Naive thymus-derived CD4-positive, alpha-beta T cell (primary cell): ENCODE measurements at regions of chr9 and their contacts with region 1.

Region 1: GRCh38 chr9:99221621-99222415 is at the starts of genes ALG2 and SEC61B:
- DNase-seq: peak; percentile 86 to 94 (median 91)
- ATAC-seq: peak; percentile 93
- H3K4me3 ChIP-seq: peak within 1 kb of the TSS; percentile 90
- H3K4me3 Mint-ChIP-seq: peak within 1 kb of the TSS; percentile 92 to 100 (median 99)
- H3K27ac ChIP-seq: peak within 1 kb of the TSS; percentile 86
- H3K27ac Mint-ChIP-seq: peak within 1 kb of the TSS; percentile 99 to 100 (median 100)
- H3K4me1 ChIP-seq: peaks cover 21 to 29% of the 10 kb centered on the region in 2 donors
- H3K4me1 Mint-ChIP-seq: peaks cover 48 to 91% (median 81%) of the 10 kb centered on the region in 7 donors
- H3K27me3 ChIP-seq: no peaks in the 10 kb centered on the region
- H3K27me3 Mint-ChIP-seq: no peaks in the 10 kb centered on the region
- total RNA-seq, gene ALG2: 13.9 to 33.7 (median 25.2) TPM
- total RNA-seq, gene SEC61B: 50.4 to 165 (median 54.6) TPM

Region 2: GRCh38 chr9:99057665-99058625 is 163.9 kb before region 1 on chr9:
- CTCF ChIA-PET with region 1: no interaction called
- POLR2A ChIA-PET with region 1: interaction called, 3 read pairs
- intact Hi-C with region 1: loop called in 1 of 2 experiments (anchors 2 kb)
- DNase-seq: peak; percentile 16 to 86 (median 82)
- ATAC-seq: peak; percentile 74
- H3K4me3 ChIP-seq: peak overlapping the region; percentile 56
- H3K4me3 Mint-ChIP-seq: peak overlapping the region; percentile 79 to 92 (median 89)
- H3K27ac ChIP-seq: peak overlapping the region; percentile 25
- H3K27ac Mint-ChIP-seq: peak overlapping the region; percentile 21 to 95 (median 75)
- H3K4me1 ChIP-seq: peaks cover 62 to 76% of the 10 kb centered on the region in 2 donors
- H3K4me1 Mint-ChIP-seq: peaks cover 62 to 90% (median 78%) of the 10 kb centered on the region in 7 donors
- H3K27me3 ChIP-seq: no peaks in the 10 kb centered on the region
- H3K27me3 Mint-ChIP-seq: peaks cover 0 to 8% (median 0%) of the 10 kb centered on the region in 5 donors

Region 3: GRCh38 chr9:99118782-99119466 is 102.9 kb before region 1 on chr9:
- CTCF ChIA-PET with region 1: no interaction called
- POLR2A ChIA-PET with region 1: no interaction called
- intact Hi-C with region 1: loop called in 1 of 2 experiments (anchors 5 kb)
- DNase-seq: peak in 8 of 9 donors; percentile 40 to 79 (median 70)
- ATAC-seq: peak; percentile 99
- H3K4me3 ChIP-seq: peak overlapping the region; percentile 39
- H3K4me3 Mint-ChIP-seq: peak overlapping the region; percentile 69 to 92 (median 82)
- H3K27ac ChIP-seq: peak overlapping the region; percentile 62
- H3K27ac Mint-ChIP-seq: peak overlapping the region; percentile 39 to 96 (median 86)
- H3K4me1 ChIP-seq: peaks cover 59 to 76% of the 10 kb centered on the region in 2 donors
- H3K4me1 Mint-ChIP-seq: peaks cover 57 to 97% (median 89%) of the 10 kb centered on the region in 7 donors
- H3K27me3 ChIP-seq: no peaks in the 10 kb centered on the region
- H3K27me3 Mint-ChIP-seq: no peaks in the 10 kb centered on the region

Region 4: GRCh38 chr9:99253772-99254431 is 32.1 kb after region 1 on chr9:
- CTCF ChIA-PET with region 1: no interaction called
- POLR2A ChIA-PET with region 1: interaction called, 8 read pairs
- intact Hi-C with region 1: loop called (anchors 1 kb)
- DNase-seq: peak in 2 of 9 donors; percentile 8 to 89
- ATAC-seq: peak; percentile 73
- H3K4me3 ChIP-seq: no peak overlapping the region
- H3K4me3 Mint-ChIP-seq: peak overlapping the region in 6 of 10 donors; percentile 38 to 81 (median 50)
- H3K27ac ChIP-seq: no peak overlapping the region
- H3K27ac Mint-ChIP-seq: peak overlapping the region in 2 of 9 donors; percentile 56 to 92
- H3K4me1 ChIP-seq: no peaks in the 10 kb centered on the region
- H3K4me1 Mint-ChIP-seq: peaks cover 0 to 38% (median 7%) of the 10 kb centered on the region in 7 donors
- H3K27me3 ChIP-seq: no peaks in the 10 kb centered on the region
- H3K27me3 Mint-ChIP-seq: peaks cover 0 to 8% (median 0%) of the 10 kb centered on the region in 5 donors

Region 5: DNA sequence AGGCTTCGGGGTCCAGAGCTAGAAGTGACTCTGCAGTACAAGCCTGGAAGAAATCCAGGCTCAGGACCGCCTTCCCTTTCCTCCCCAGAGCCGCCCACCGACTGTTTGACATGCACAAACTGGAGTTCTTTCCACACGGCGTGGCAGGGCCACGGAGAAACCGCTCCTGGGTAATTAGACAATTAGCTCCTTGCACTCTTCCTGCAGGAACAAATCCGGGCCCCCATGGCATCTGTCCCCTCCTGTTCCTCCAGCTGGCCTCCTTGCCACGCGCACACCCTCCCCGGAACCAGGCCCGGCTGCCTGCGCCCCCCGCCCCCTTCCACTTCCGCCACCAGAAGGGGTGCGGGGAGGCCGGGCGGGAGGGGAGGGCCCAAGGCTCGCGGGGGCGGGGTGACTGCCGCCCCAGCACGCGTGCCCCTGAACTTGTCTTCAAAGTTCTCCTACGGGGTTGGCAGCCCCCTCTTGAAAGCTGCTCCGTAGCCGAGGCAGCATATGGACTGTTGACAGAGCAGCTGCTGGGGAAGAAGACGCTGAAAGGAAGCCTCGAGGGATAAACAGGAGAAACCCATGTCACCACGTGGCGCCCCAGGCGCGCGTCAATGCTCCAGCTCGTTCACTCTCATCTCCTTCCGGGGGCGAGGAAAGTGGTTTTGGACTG is 74.6 kb after region 1 on chr9:
- CTCF ChIA-PET with region 1: no interaction called
- POLR2A ChIA-PET with region 1: no interaction called
- intact Hi-C with region 1: loop called in 1 of 2 experiments (anchors 1 kb)
- DNase-seq: peak in 7 of 9 donors; percentile 19 to 53 (median 51)
- ATAC-seq: peak; percentile 76
- H3K4me3 ChIP-seq: peak overlapping the region; percentile 8
- H3K4me3 Mint-ChIP-seq: peak overlapping the region; percentile 14 to 59 (median 47)
- H3K27ac ChIP-seq: no peak overlapping the region
- H3K27ac Mint-ChIP-seq: peak overlapping the region in 5 of 9 donors; percentile 66 to 75 (median 73)
- H3K4me1 ChIP-seq: peaks cover 0 to 4% of the 10 kb centered on the region in 2 donors
- H3K4me1 Mint-ChIP-seq: peaks cover 0 to 9% (median 4%) of the 10 kb centered on the region in 7 donors
- H3K27me3 ChIP-seq: no peaks in the 10 kb centered on the region
- H3K27me3 Mint-ChIP-seq: peaks cover 0 to 24% (median 9%) of the 10 kb centered on the region in 5 donors

Region 6: GRCh38 chr9:99353408-99353807 is 131.6 kb after region 1 on chr9:
- CTCF ChIA-PET with region 1: no interaction called
- POLR2A ChIA-PET with region 1: no interaction called
- intact Hi-C with region 1: no loop called
- DNase-seq: no peak
- ATAC-seq: no peak
- H3K4me3 ChIP-seq: no peak overlapping the region
- H3K4me3 Mint-ChIP-seq: no peak overlapping the region
- H3K27ac ChIP-seq: no peak overlapping the region
- H3K27ac Mint-ChIP-seq: no peak overlapping the region
- H3K4me1 ChIP-seq: no peaks in the 10 kb centered on the region
- H3K4me1 Mint-ChIP-seq: peaks cover 0 to 3% (median 0%) of the 10 kb centered on the region in 7 donors
- H3K27me3 ChIP-seq: peaks cover 0 to 5% of the 10 kb centered on the region in 2 donors
- H3K27me3 Mint-ChIP-seq: peaks cover 0 to 13% (median 7%) of the 10 kb centered on the region in 5 donors

Region 7: GRCh38 chr9:100098887-100099721 is 877.3 kb after region 1 on chr9 and contains the starts of genes ERP44 and INVS:
- CTCF ChIA-PET with region 1: no interaction called
- POLR2A ChIA-PET with region 1: no interaction called
- intact Hi-C with region 1: loop called (anchors 1 kb)
- DNase-seq: peak; percentile 82 to 98 (median 94)
- ATAC-seq: peak; percentile 99
- H3K4me3 ChIP-seq: peak within 1 kb of the TSS; percentile 93
- H3K4me3 Mint-ChIP-seq: peak within 1 kb of the TSS; percentile 94 to 100 (median 98)
- H3K27ac ChIP-seq: peak within 1 kb of the TSS; percentile 89
- H3K27ac Mint-ChIP-seq: peak within 1 kb of the TSS; percentile 84 to 99 (median 97)
- H3K4me1 ChIP-seq: peaks cover 18 to 25% of the 10 kb centered on the region in 2 donors
- H3K4me1 Mint-ChIP-seq: peaks cover 26 to 53% (median 43%) of the 10 kb centered on the region in 7 donors
- H3K27me3 ChIP-seq: no peaks in the 10 kb centered on the region
- H3K27me3 Mint-ChIP-seq: no peaks in the 10 kb centered on the region
- total RNA-seq, gene ERP44: 9.8 to 19.5 (median 15.2) TPM
- total RNA-seq, gene INVS: 15.0 to 20.8 (median 20.6) TPM

Region 8: GRCh38 chr9:100426530-100427428 is 1205.0 kb after region 1 on chr9 and contains the start of gene MSANTD3:
- CTCF ChIA-PET with region 1: no interaction called
- POLR2A ChIA-PET with region 1: no interaction called
- intact Hi-C with region 1: loop called in 1 of 2 experiments (anchors 5 kb)
- DNase-seq: peak; percentile 22 to 67 (median 44)
- ATAC-seq: peak; percentile 87
- H3K4me3 ChIP-seq: peak within 1 kb of the TSS; percentile 73
- H3K4me3 Mint-ChIP-seq: peak within 1 kb of the TSS; percentile 90 to 99 (median 96)
- H3K27ac ChIP-seq: peak within 1 kb of the TSS; percentile 68
- H3K27ac Mint-ChIP-seq: peak within 1 kb of the TSS; percentile 84 to 98 (median 93)
- H3K4me1 ChIP-seq: peaks cover 7 to 8% of the 10 kb centered on the region in 2 donors
- H3K4me1 Mint-ChIP-seq: peaks cover 22 to 48% (median 42%) of the 10 kb centered on the region in 7 donors
- H3K27me3 ChIP-seq: no peaks in the 10 kb centered on the region
- H3K27me3 Mint-ChIP-seq: peaks cover 0 to 18% (median 2%) of the 10 kb centered on the region in 5 donors
- total RNA-seq, gene MSANTD3: 6.8 to 13.4 (median 12.0) TPM